ENCODE measurements at regions of chr5 and their contacts with region 1.

Region 1: DNA sequence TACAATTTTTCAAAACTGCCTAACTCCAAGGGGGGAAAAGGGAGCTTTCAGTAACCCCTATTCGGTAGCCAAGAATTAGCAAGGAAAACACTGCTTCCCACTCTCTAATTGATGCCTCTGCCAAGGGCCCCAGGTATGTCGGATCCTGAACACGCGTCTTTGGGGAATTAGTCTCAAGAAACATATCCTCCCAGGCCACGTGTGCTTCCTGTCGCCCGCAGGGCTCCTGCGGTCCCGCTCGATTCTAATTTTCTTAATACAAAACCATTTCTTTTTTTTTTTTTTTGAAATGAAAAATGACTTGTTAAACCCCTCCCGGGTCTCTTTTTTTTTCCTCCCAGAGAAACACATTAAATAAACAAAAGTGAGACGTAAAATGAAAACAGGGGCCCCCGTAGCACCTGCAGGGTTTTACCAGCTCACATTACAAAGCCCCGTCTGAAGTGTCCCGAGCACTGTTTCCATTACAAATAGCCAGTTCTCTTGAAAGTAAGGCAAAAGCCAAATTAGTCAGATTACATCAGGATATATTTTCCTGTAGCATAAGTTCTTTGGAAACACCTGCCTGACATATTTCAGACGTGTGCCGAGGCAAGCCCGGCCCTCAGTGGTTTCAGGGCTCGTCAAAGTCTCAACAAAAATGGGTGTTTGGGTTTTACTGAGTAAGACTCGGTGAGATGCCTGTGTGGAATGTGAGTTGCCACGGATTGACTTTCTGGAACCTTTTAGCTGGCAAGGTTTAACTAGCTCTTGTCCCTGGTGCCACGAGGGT is 21.5 kb downstream of the SMIM23 start:
- DNase-seq: peak; percentile 5 to 80
- H3K4me3 ChIP-seq: peak overlapping the region; percentile 42; the same call in 1 of the 2 replicates
- H3K27ac ChIP-seq: peak overlapping the region; percentile 63
- H3K4me1 ChIP-seq: peaks cover 19% of the 10 kb centered on the region
- H3K27me3 ChIP-seq: no peaks in the 10 kb centered on the region; the same call in 1 of the 2 replicates
- CTCF ChIP-seq: no peak

Region 2: GRCh38 chr5:169808118-169808581 is 1999.0 kb before region 1 on chr5:
- CTCF ChIA-PET with region 1: no interaction called
- POLR2A ChIA-PET with region 1: no interaction called
- intact Hi-C with region 1: no loop called
- DNase-seq: no peak
- H3K4me3 ChIP-seq: no peak overlapping the region
- H3K27ac ChIP-seq: no peak overlapping the region
- H3K4me1 ChIP-seq: peaks cover 13% of the 10 kb centered on the region
- H3K27me3 ChIP-seq: no peaks in the 10 kb centered on the region
- CTCF ChIP-seq: no peak

Region 3: DNA sequence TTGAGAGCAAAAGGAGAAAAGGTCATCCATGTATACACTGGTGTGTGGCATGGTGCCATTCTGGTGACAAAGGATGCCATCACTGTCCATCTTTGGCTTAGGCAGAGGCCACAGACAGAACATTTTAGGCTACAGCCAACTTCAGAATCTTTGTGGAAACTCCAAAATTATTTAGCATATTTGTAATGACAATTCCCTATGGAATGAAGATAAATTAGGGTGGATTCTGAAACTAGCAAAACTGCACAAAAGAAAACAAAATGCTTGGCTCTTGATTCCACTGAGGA is 106.8 kb after region 1 on chr5:
- CTCF ChIA-PET with region 1: interaction called, 11 read pairs
- POLR2A ChIA-PET with region 1: no interaction called
- intact Hi-C with region 1: no loop called
- DNase-seq: no peak
- H3K4me3 ChIP-seq: no peak overlapping the region
- H3K27ac ChIP-seq: no peak overlapping the region
- H3K4me1 ChIP-seq: no peaks in the 10 kb centered on the region
- H3K27me3 ChIP-seq: no peaks in the 10 kb centered on the region
- CTCF ChIP-seq: no peak

Region 4: GRCh38 chr5:172235827-172236736 is 428.9 kb after region 1 on chr5:
- CTCF ChIA-PET with region 1: no interaction called
- POLR2A ChIA-PET with region 1: no interaction called
- intact Hi-C with region 1: no loop called
- DNase-seq: no peak
- H3K4me3 ChIP-seq: no peak overlapping the region
- H3K27ac ChIP-seq: no peak overlapping the region
- H3K4me1 ChIP-seq: 0 out of 2 replicates have a peak, but pooled peaks cover 4% of the 10 kb centered on the region
- H3K27me3 ChIP-seq: no peaks in the 10 kb centered on the region
- CTCF ChIP-seq: no peak